ENCODE measurements at regions of chr11 and their contacts with region 1.

Region 1: DNA sequence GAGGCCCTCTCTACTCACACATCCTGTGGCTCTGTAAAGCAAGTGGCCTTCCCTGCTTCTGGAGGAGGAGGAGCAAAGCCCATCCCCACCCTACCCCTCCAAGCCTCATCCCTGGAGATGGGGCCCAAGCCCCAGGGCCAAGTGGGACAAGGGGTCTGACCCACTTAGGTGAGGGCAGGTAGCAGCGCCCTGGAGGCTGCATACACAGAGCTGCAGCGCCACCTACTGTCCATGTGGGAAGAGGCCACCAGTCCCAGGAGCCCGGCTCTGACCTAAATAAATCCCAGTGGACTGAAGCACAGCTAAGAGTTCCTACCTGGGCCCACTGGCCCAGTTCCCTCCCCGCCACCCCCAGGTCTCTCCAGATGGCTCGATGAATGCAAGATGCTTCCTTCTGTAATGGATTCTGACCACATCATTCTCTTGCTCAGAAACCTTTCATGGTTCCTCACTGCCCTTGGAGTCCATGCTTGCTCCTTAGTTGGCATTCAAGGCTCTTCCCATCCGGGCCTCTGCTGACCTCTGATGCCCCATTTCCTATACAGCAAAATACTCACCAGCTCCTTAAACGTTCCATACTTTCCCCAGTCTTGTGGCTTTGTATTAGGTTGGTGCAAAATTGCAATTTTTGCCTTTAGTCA is 62.1 kb downstream of the THAP12 start:
- DNase-seq: peak; percentile 75 to 80 (median 78)
- H3K4me3 ChIP-seq: no peak overlapping the region
- H3K4me3 Mint-ChIP-seq: no peak overlapping the region
- H3K27ac ChIP-seq: no peak overlapping the region
- H3K27ac Mint-ChIP-seq: peak overlapping the region in 1 of 7 donors; percentile 67
- H3K4me1 ChIP-seq: no peaks in the 10 kb centered on the region
- H3K4me1 Mint-ChIP-seq: peaks cover 0 to 14% (median 6%) of the 10 kb centered on the region in 4 donors
- H3K27me3 ChIP-seq: peaks cover 8% of the 10 kb centered on the region
- H3K27me3 Mint-ChIP-seq: peaks cover 23 to 27% of the 10 kb centered on the region in 2 donors

Region 2: DNA sequence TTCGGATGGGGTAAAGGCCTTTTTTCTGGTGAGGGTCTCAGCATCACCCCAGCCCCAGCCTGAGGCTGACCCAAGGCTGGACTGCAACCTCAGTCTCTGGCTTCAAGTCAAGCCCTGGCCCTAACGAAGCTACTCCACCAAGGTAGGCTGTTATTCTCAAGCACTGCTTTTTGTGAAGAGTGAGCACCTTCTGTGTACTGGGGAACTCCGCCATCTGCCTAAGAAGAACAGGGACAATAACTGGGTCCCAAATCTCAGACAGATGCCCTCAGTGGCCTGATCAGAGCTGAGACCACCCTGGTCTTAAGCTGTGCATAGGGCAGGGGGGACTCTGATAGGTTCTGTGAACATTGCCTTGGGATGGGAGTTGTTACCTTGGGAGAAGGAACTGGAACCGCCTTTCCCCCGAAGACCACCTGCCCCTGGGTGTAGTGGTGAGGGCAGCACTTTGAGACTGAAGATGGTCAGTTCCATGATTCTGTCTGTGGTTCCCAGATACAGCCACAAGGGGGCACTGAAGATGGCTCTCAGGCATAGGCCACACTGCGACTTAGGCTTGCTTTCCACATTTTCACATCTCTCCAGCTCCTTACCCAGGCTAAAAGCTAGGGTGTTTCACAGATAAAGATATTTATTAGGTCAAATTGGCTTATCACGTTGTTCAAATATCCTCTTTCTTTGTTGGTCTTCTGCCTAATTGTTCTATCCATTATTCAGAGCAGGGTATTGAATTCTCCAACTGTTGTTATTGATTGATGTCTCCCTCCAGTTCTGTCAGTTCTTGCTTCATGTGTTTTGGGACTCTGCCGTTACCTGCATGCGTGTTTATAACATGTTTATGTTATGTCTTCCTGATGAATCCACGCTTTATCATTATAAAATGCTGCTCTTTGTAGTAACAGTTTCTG is 515.7 kb before region 1 on chr11:
- CTCF ChIA-PET with region 1: interaction called, 5 read pairs
- POLR2A ChIA-PET with region 1: no interaction called
- intact Hi-C with region 1: loop called (anchors 1 kb)
- DNase-seq: peak; percentile 59 to 68 (median 61)
- H3K4me3 ChIP-seq: no peak overlapping the region
- H3K4me3 Mint-ChIP-seq: no peak overlapping the region
- H3K27ac ChIP-seq: no peak overlapping the region
- H3K27ac Mint-ChIP-seq: peak overlapping the region in 2 of 7 donors; percentile 23 to 44
- H3K4me1 ChIP-seq: peaks cover 20% of the 10 kb centered on the region
- H3K4me1 Mint-ChIP-seq: peaks cover 9 to 35% (median 20%) of the 10 kb centered on the region in 4 donors
- H3K27me3 ChIP-seq: no peaks in the 10 kb centered on the region
- H3K27me3 Mint-ChIP-seq: no peaks in the 10 kb centered on the region

Region 3: DNA sequence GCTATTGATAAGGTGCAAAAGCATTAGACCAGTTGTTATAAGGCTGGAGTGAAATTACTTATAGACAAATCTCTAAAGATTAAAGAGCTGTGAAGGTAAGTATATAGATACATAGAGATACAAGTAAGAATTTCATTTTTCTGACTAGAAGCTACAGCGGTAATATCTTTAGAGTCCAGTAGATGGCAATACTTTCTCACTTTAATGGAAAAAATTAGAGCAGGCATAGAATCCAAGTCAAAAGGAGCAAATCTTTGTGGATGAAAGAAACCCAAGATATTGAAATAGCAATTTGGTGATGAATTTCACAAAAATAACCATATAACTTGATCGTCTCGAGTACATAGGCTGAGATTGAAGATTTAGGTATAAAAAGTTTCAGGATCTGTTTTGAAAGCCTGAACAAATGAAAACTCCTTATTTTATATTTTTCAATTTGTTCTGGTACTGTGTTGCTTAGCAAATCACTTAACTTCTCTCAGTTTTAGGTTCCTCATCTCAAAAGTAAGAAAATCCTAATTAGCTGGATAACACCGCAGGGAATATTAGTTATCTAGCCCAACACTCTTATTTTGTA is 421.9 kb before region 1 on chr11:
- CTCF ChIA-PET with region 1: interaction called, 46 read pairs
- POLR2A ChIA-PET with region 1: no interaction called
- intact Hi-C with region 1: no loop called
- DNase-seq: peak in 4 of 5 donors; percentile 22 to 42 (median 30)
- H3K4me3 ChIP-seq: no peak overlapping the region
- H3K4me3 Mint-ChIP-seq: no peak overlapping the region
- H3K27ac ChIP-seq: no peak overlapping the region
- H3K27ac Mint-ChIP-seq: no peak overlapping the region
- H3K4me1 ChIP-seq: no peaks in the 10 kb centered on the region
- H3K4me1 Mint-ChIP-seq: peaks cover 0 to 4% (median 3%) of the 10 kb centered on the region in 4 donors
- H3K27me3 ChIP-seq: no peaks in the 10 kb centered on the region
- H3K27me3 Mint-ChIP-seq: no peaks in the 10 kb centered on the region

Region 4: DNA sequence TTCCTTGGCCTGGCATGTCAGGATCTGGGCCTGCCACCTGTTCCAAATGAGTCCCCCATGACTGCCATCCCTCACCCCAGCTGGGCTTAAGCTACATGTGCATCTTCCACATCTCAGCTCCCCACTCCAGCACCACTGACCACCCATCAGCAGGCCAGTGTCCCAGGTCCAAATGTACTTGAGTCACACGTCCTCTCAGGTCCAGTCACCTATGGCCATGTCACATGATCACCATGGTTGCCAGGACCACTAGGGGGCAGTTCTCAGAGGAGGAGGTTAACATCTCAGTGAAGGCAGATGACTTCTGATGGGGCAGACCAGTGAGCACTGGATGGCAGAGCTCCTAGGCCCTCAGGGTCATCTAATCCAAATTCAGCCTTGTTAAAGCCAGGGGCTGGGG is 70.7 kb before region 1 on chr11:
- CTCF ChIA-PET with region 1: interaction called, 11 read pairs
- POLR2A ChIA-PET with region 1: no interaction called
- intact Hi-C with region 1: no loop called
- DNase-seq: no peak
- H3K4me3 ChIP-seq: no peak overlapping the region
- H3K4me3 Mint-ChIP-seq: no peak overlapping the region
- H3K27ac ChIP-seq: no peak overlapping the region
- H3K27ac Mint-ChIP-seq: no peak overlapping the region
- H3K4me1 ChIP-seq: no peaks in the 10 kb centered on the region
- H3K4me1 Mint-ChIP-seq: peaks cover 0 to 3% (median 0%) of the 10 kb centered on the region in 4 donors
- H3K27me3 ChIP-seq: no peaks in the 10 kb centered on the region
- H3K27me3 Mint-ChIP-seq: peaks cover 2 to 7% of the 10 kb centered on the region in 2 donors

Region 5: DNA sequence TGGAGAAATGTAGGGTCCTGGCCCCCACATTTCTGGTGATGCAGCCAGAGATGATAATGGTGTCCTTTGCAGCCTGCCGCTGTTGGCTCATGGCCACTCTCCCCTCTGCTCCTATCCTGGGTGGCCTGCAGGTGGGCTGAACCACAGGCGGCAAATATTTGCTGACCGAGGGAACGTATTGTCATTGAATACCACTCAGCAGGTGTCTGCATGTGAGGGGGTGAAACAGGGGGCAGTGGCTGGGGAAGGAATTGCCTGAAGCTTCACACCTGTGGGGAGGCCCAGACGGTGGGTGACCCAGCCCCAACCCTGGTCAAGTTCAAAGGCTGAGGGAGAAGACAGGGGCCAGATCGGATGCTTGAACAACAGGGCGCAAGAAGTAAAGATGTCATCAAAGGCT is 39.2 kb before region 1 on chr11:
- CTCF ChIA-PET with region 1: no interaction called
- POLR2A ChIA-PET with region 1: no interaction called
- intact Hi-C with region 1: no loop called
- DNase-seq: no peak
- H3K4me3 ChIP-seq: no peak overlapping the region
- H3K4me3 Mint-ChIP-seq: no peak overlapping the region
- H3K27ac ChIP-seq: no peak overlapping the region
- H3K27ac Mint-ChIP-seq: peak overlapping the region in 2 of 7 donors; percentile 52 to 62
- H3K4me1 ChIP-seq: no peaks in the 10 kb centered on the region
- H3K4me1 Mint-ChIP-seq: no peaks in the 10 kb centered on the region
- H3K27me3 ChIP-seq: no peaks in the 10 kb centered on the region
- H3K27me3 Mint-ChIP-seq: no peaks in the 10 kb centered on the region

Region 6: GRCh38 chr11:76371170-76371569 is 52.3 kb after region 1 on chr11:
- CTCF ChIA-PET with region 1: no interaction called
- POLR2A ChIA-PET with region 1: no interaction called
- intact Hi-C with region 1: no loop called
- DNase-seq: no peak
- H3K4me3 ChIP-seq: no peak overlapping the region
- H3K4me3 Mint-ChIP-seq: peak overlapping the region in 1 of 8 donors; percentile 31
- H3K27ac ChIP-seq: no peak overlapping the region
- H3K27ac Mint-ChIP-seq: peak overlapping the region in 4 of 7 donors; percentile 15 to 63 (median 51)
- H3K4me1 ChIP-seq: peaks cover 33% of the 10 kb centered on the region
- H3K4me1 Mint-ChIP-seq: peaks cover 40 to 74% (median 54%) of the 10 kb centered on the region in 4 donors
- H3K27me3 ChIP-seq: no peaks in the 10 kb centered on the region
- H3K27me3 Mint-ChIP-seq: no peaks in the 10 kb centered on the region

Measured in CD4-positive, alpha-beta memory T cell (primary cell).